Ascending aorta (tissue), 2 donors: ENCODE measurements at regions of chr4 and their contacts with region 1.

Region 1: DNA sequence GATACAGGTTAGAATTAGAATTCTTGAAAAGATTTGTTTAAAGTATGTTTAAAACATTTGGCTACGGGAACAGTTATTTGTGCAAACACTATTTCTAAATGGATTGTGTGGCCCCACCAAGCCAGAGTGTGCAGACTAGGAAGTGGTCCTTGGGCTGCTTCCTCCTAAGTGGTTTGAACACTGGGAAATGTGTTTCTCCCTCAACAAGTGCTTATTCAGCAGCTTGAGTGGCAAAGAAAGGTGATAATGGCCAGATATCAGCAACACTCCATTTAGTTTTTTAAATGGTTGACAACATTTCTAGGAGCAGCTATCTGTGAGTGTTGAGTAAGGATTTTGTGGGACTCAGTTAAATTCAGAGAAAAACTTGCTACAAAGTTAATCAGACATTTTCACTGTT is 141.4 kb upstream of the LNX1 start:
- DNase-seq: no peak
- H3K4me3 ChIP-seq: no peak overlapping the region
- H3K27ac ChIP-seq: no peak overlapping the region
- H3K4me1 ChIP-seq: peaks cover 0 to 5% of the 10 kb centered on the region in 2 donors
- H3K27me3 ChIP-seq: no peaks in the 10 kb centered on the region
- CTCF ChIP-seq: no peak

Region 2: GRCh38 chr4:53653484-53654053 is 79.1 kb before region 1 on chr4:
- intact Hi-C with region 1: no loop called
- DNase-seq: no peak
- H3K4me3 ChIP-seq: no peak overlapping the region
- H3K27ac ChIP-seq: no peak overlapping the region
- H3K4me1 ChIP-seq: peaks cover 0 to 9% of the 10 kb centered on the region in 2 donors
- H3K27me3 ChIP-seq: no peaks in the 10 kb centered on the region
- CTCF ChIP-seq: no peak

Region 3: GRCh38 chr4:53790286-53790685 is 57.6 kb after region 1 on chr4:
- intact Hi-C with region 1: loop called (anchors 2 kb)
- DNase-seq: no peak
- H3K4me3 ChIP-seq: no peak overlapping the region
- H3K27ac ChIP-seq: no peak overlapping the region
- H3K4me1 ChIP-seq: no peaks in the 10 kb centered on the region
- H3K27me3 ChIP-seq: no peaks in the 10 kb centered on the region
- CTCF ChIP-seq: no peak

Region 4: DNA sequence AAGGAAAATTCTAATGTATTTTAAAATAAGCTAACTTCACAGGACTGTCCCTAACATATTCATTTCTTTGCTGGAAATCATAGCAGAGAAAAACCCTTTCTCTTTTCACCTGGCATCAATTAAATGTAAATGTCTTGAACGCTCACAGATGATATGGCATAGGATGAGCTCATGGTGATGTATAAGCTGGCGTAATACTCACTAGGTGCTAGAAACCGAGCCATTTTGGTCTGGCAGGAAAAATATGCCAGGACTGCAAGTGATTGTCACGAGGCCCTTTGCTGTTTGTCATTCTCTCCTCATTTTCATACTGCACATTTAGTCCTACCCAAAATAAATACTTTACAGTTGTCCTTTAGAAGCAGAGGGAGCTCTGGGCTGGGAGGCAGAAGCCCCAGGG is 81.3 kb after region 1 on chr4:
- intact Hi-C with region 1: no loop called
- DNase-seq: no peak
- H3K4me3 ChIP-seq: no peak overlapping the region
- H3K27ac ChIP-seq: no peak overlapping the region
- H3K4me1 ChIP-seq: no peaks in the 10 kb centered on the region
- H3K27me3 ChIP-seq: no peaks in the 10 kb centered on the region
- CTCF ChIP-seq: no peak